ENCODE measurements at regions of chr1 and their contacts with region 1.

Region 1: DNA sequence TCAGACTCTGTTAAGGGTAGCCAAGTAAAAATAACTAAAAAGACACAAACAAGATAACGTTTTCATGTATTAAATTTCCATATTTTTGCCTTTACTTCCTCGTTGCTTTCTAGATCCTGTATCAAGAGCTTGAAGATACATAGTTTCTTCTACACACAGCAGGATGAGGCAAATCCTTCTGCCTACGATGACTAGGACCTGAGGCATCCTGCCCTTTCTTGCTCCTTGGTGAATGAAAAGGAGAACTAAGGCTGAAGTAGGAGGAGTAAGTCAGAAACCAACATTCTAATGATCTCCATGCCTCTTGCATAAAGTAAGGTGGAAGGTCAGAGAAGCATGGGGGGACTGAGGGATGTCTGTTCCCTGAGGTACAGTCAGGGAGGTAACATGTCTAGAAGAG is 102.6 kb downstream of the GPATCH2 start:
- DNase-seq: no peak
- ATAC-seq: no peak

Region 2: GRCh38 chr1:217333939-217334338 is 194.3 kb before region 1 on chr1:
- intact Hi-C with region 1: no loop called
- DNase-seq: no peak
- ATAC-seq: no peak

Region 3: GRCh38 chr1:217453816-217454215 is 74.5 kb before region 1 on chr1:
- intact Hi-C with region 1: loop called (anchors 5 kb)
- DNase-seq: no peak
- ATAC-seq: peak; percentile 94

Measured in Right ventricle myocardium inferior (tissue), 1 donor.